ENCODE measurements at regions of chr14 and their contacts with region 1.

Region 1: DNA sequence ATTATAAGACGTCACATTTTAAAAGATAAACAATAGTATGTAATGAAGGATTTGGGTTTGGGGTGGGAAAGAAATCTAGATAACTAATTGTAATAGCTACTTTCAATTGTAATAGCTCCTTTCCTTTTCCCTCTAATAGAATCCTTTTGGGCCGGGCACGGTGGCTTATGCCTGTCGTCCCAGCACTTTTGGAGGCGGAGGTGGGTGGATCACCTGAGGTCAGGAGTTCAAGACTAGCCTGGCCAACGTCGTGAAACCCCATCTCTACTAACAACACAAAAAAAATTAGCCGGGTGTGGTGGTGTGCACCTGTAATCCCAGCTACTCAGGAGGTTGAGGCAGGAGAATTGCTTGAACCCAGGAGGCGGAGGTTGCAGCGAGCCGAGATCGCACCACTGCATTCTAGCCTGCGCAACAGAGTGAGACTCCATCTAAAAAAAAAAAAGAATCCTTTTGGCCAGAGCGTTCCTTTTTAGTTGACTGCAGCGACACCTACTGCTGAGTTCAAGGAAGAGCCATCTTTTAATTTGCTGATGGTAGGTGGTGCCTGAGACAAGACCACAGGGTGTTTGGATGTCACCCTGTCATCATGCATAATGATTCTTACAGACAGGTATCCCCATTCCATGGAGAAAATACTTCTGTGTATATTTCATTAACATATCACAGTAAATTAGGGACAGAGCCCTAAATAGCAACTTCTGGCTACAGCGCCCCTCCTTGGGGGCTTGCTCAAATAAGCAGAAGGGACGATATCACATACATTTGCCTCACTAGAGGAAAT is 79.5 kb downstream of the ARMH4 start:
- DNase-seq: peak; percentile 56
- ATAC-seq: peak; percentile 88
- H3K4me3 ChIP-seq: no peak overlapping the region
- H3K27ac ChIP-seq: no peak overlapping the region
- H3K4me1 ChIP-seq: no peaks in the 10 kb centered on the region
- H3K27me3 ChIP-seq: no peaks in the 10 kb centered on the region; a peak in 1 of 5 replicates
- CTCF ChIP-seq: peak; percentile 83
- EP300 ChIP-seq: no peak
- POLR2A ChIP-seq: no peak
- RAD21 ChIP-seq: peak; percentile 41; the same call in 1 of the 2 replicates

Region 2: GRCh38 chr14:57486767-57487379 is 585.6 kb before region 1 on chr14:
- CTCF ChIA-PET with region 1: interaction called, 13 read pairs
- POLR2A ChIA-PET with region 1: no interaction called
- in situ Hi-C with region 1: no loop called
- intact Hi-C with region 1: loop called (anchors 1 kb)
- DNase-seq: peak; percentile 41
- ATAC-seq: peak; percentile 68
- H3K4me3 ChIP-seq: no peak overlapping the region
- H3K27ac ChIP-seq: no peak overlapping the region
- H3K4me1 ChIP-seq: no peaks in the 10 kb centered on the region
- H3K27me3 ChIP-seq: no peaks in the 10 kb centered on the region
- CTCF ChIP-seq: peak; percentile 70
- EP300 ChIP-seq: no peak
- POLR2A ChIP-seq: no peak
- RAD21 ChIP-seq: 0 out of 2 replicates have a peak, but pooled peaks have one; percentile 17

Region 3: GRCh38 chr14:57526942-57527341 is 545.5 kb before region 1 on chr14:
- CTCF ChIA-PET with region 1: interaction called, 3 read pairs
- POLR2A ChIA-PET with region 1: no interaction called
- in situ Hi-C with region 1: no loop called
- intact Hi-C with region 1: loop called (anchors 5 kb)
- DNase-seq: peak; percentile 12
- ATAC-seq: no peak
- H3K4me3 ChIP-seq: no peak overlapping the region
- H3K27ac ChIP-seq: no peak overlapping the region
- H3K4me1 ChIP-seq: no peaks in the 10 kb centered on the region
- H3K27me3 ChIP-seq: no peaks in the 10 kb centered on the region
- CTCF ChIP-seq: no peak
- EP300 ChIP-seq: no peak
- POLR2A ChIP-seq: no peak
- RAD21 ChIP-seq: no peak

Region 4: GRCh38 chr14:57692671-57693070 is 379.8 kb before region 1 on chr14:
- CTCF ChIA-PET with region 1: interaction called, 4 read pairs
- POLR2A ChIA-PET with region 1: no interaction called
- in situ Hi-C with region 1: loop called (anchors 5 kb)
- intact Hi-C with region 1: loop called (anchors 1 kb)
- DNase-seq: peak; percentile 39
- ATAC-seq: peak; percentile 68
- H3K4me3 ChIP-seq: no peak overlapping the region
- H3K27ac ChIP-seq: no peak overlapping the region
- H3K4me1 ChIP-seq: no peaks in the 10 kb centered on the region
- H3K27me3 ChIP-seq: no peaks in the 10 kb centered on the region
- CTCF ChIP-seq: peak; percentile 45
- EP300 ChIP-seq: no peak
- POLR2A ChIP-seq: no peak
- RAD21 ChIP-seq: no peak

Region 5: DNA sequence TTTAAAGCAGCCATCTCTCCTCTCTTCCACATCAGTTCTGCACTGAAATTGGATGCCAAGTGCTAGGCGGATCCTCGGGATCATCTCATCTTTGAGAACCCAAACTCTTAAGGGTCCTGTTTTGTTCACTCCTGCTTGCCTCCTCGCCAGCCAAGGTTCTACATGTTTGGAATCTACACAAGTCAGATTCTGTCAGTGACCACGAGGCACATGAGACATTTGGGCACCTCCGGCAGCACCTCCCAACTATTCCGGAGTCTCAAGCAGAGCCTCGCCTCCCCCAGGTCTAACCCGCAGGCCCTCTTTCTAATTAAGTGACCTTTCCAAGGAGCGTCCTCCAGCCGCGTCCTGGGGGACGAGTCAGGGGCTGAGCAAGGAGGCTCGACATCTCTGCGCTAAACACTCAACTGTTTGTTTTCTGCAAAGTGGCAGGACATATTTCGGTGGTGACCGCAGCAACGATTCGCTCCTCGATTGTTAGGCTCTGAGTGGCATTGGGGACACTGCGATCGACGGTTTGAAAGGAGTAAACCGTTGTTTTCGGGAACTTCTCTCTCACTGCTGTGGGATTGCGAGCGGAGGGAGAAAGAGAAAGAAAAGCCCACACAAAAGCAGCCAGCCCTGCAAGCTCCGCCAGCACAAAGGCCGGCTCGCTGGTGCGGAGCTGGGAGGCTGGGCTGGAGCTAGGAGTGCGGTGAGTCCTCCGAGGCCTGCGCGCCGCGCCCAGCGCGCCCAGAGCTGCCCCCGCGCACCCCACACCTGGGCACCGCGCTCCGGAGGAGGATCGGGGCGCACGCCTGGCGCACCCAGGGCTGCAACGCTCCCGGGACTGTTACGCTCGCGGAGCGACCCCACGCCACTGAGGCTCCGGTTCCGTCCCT is 78.9 kb after region 1 on chr14:
- CTCF ChIA-PET with region 1: no interaction called
- POLR2A ChIA-PET with region 1: no interaction called
- in situ Hi-C with region 1: no loop called
- intact Hi-C with region 1: no loop called
- DNase-seq: peak; percentile 7
- ATAC-seq: peak; percentile 80
- H3K4me3 ChIP-seq: peak overlapping the region; percentile 47 to 69 (median 67)
- H3K27ac ChIP-seq: no peak overlapping the region
- H3K4me1 ChIP-seq: peaks cover 9% of the 10 kb centered on the region
- H3K27me3 ChIP-seq: peaks cover 1 to 29% of the 10 kb centered on the region in 2 experiments; a peak in 4 of 5 replicates
- CTCF ChIP-seq: no peak
- EP300 ChIP-seq: no peak
- POLR2A ChIP-seq: no peak
- RAD21 ChIP-seq: no peak

Measured in HepG2 (cell line).